Heart right ventricle (tissue), 16 donors: ENCODE measurements at regions of chr10 and their contacts with region 1.

Region 1: GRCh38 chr10:22251751-22252223 is 34.0 kb upstream of the EBLN1 start:
- DNase-seq: peak; percentile 64 to 79
- ATAC-seq: peak; percentile 54 to 82 (median 68)
- H3K4me3 ChIP-seq: peak overlapping the region; percentile 43 to 85 (median 76)
- H3K27ac ChIP-seq: peak overlapping the region; percentile 96 to 99 (median 98)
- H3K4me1 ChIP-seq: peaks cover 0 to 37% (median 12%) of the 10 kb centered on the region in 9 donors
- H3K27me3 ChIP-seq: peaks cover 0 to 13% (median 0%) of the 10 kb centered on the region in 7 donors
- CTCF ChIP-seq: no peak

Region 2: DNA sequence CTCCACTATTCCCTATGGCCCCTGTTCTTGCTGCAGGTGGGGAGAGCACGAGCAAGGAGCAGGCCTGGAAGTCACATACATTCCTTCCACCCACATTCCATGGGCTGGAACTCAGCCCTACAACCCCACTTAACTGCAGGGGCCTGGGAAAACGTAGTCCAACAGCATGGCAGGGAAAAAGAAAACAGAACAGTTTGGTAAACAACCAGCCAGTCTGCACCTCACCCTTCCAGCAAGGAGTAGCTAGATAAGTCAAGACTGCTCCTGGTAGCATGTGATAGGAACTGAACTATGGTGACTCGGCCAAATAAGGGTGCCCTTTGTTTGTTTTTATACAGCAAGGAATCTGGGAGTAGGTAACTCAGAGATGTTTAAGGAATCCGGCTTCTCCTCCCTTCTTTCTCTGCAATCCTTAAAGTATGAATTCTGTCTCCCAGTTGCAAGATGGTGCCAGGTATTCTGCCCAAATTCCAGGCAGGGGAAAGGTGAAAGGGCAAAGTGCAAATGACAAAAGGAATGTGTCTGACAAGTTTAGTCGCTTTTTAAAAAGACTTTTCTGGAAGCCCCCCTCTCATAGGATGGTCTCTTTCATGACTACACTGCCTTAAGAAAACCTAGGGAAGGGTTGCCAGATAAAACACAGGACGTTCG is 1043.0 kb before region 1 on chr10:
- intact Hi-C with region 1: no loop called
- DNase-seq: no peak
- ATAC-seq: no peak
- H3K4me3 ChIP-seq: no peak overlapping the region
- H3K27ac ChIP-seq: no peak overlapping the region
- H3K4me1 ChIP-seq: peaks cover 0 to 3% (median 0%) of the 10 kb centered on the region in 9 donors
- H3K27me3 ChIP-seq: no peaks in the 10 kb centered on the region
- CTCF ChIP-seq: no peak

Region 3: DNA sequence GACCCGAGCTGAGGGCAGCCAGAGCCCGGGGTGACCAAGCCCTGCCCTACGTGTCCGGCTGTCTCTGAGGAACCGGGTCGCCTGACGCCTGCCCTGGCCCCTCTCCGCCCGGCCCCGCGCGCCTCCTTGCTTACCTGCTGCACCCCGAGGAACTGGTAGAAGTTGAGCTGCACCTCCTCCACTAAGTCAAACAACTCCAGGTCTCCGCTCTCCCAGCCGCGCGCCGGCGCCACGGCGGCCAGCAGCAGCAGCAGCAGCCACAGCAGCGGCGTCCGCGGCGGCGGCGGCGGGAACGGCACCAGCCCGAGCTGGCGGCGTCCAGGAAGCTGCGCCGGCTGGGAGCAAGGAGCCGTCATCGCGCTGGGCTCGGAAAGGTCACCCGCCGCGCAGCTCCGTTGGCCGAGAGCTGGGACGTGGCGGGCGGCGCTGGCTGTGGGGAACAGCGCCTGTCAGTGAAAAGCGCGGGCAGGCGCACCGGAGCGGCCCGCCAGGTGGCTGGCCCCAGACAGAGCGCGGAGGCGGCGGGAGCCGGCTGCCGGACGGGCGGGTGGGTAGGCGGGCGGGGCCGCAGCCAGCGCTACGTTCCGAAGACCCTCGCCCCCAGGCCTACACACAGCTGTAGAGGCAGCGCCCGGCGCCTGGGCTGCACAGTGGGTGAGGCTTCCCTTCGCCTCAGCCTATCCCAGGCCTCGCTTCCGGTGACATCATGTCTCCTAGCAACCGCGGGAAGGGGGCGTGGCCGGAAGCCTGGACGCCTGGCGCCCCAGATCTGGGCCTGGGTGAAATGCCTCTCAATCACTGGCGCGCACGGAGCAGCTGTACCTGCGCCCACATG is 248.5 kb before region 1 on chr10 and contains the start of gene DNAJC1:
- intact Hi-C with region 1: loop called in 5 of 10 experiments (anchors 5 to 10 kb)
- DNase-seq: peak; percentile 98 to 99
- ATAC-seq: peak; percentile 99 to 100 (median 100)
- H3K4me3 ChIP-seq: peak within 1 kb of the TSS; percentile 52 to 94 (median 80)
- H3K27ac ChIP-seq: peak within 1 kb of the TSS; percentile 72 to 98 (median 94)
- H3K4me1 ChIP-seq: peaks cover 0 to 28% (median 16%) of the 10 kb centered on the region in 9 donors
- H3K27me3 ChIP-seq: no peaks in the 10 kb centered on the region
- CTCF ChIP-seq: peak in 4 of 9 donors; percentile 5 to 21 (median 11)
- total RNA-seq, gene DNAJC1: 8.9 to 18.1 (median 11.4) TPM

Region 4: GRCh38 chr10:22316285-22317120 is 64.7 kb after region 1 on chr10 and contains the start of gene COMMD3:
- intact Hi-C with region 1: loop called in 8 of 10 experiments (anchors 2 to 10 kb)
- DNase-seq: peak; percentile 89 to 91
- ATAC-seq: peak; percentile 91 to 96 (median 93)
- H3K4me3 ChIP-seq: peak within 1 kb of the TSS; percentile 83 to 96 (median 90)
- H3K27ac ChIP-seq: peak within 1 kb of the TSS; percentile 85 to 96 (median 94)
- H3K4me1 ChIP-seq: peaks cover 0 to 44% (median 35%) of the 10 kb centered on the region in 9 donors
- H3K27me3 ChIP-seq: no peaks in the 10 kb centered on the region
- CTCF ChIP-seq: no peak
- total RNA-seq, gene COMMD3: 72.7 to 95.0 (median 80.6) TPM

Region 5: DNA sequence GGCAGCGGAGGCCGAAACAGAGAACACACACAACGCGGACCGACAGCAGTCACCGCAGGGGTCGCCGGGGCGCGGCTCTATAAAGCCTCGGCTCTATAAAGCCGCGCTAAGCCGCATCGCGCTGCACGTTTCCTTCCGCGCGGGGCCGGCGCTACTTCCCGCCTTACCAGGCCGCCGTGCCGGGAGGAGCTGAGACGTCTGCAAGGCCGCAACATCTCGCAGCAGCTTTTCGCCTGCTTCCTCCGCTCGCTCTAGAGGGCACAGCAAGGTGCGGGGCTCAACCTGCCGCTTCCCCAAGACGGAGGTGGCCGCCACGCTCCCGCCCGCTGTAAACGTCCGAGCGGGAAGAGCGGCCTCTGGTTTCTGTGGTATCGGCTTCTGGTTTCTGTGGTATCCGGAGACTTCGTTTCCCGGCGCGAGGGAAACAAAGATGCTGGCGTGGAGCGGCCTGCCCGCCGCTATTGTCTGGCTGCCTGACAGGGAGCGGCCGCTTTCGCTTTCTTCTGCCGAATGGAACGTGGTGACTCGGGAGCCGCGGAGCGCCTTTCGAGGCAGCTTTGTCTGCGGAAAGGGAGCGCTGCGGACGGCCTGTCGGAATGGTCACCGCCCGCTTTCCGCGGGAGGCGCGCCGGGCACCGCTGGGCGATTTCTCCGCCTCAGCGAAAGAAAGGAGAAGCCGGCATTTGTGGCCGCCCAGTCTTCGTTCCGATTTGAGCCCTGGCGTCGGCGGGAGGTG is 185.3 kb after region 1 on chr10:
- intact Hi-C with region 1: loop called in 3 of 10 experiments (anchors 10 kb)
- DNase-seq: peak; percentile 92 to 93
- ATAC-seq: peak; percentile 94 to 98 (median 97)
- H3K4me3 ChIP-seq: peak overlapping the region; percentile 65 to 88 (median 78)
- H3K27ac ChIP-seq: peak overlapping the region; percentile 91 to 98 (median 95)
- H3K4me1 ChIP-seq: peaks cover 0 to 29% (median 20%) of the 10 kb centered on the region in 9 donors
- H3K27me3 ChIP-seq: peaks cover 0 to 15% (median 0%) of the 10 kb centered on the region in 7 donors
- CTCF ChIP-seq: peak in 5 of 9 donors; percentile 3 to 49 (median 22)